Naive thymus-derived CD4-positive, alpha-beta T cell (primary cell): ENCODE measurements at regions of chr19 and their contacts with region 1.

Region 1: GRCh38 chr19:13150187-13150930 is at the starts of genes IER2 and STX10:
- DNase-seq: peak; percentile 84 to 93 (median 92)
- ATAC-seq: peak; percentile 72
- H3K4me3 ChIP-seq: peak within 1 kb of the TSS; percentile 96
- H3K4me3 Mint-ChIP-seq: peak within 1 kb of the TSS; percentile 94 to 100 (median 98)
- H3K27ac ChIP-seq: peak within 1 kb of the TSS; percentile 96
- H3K27ac Mint-ChIP-seq: peak within 1 kb of the TSS; percentile 95 to 99 (median 97)
- H3K4me1 ChIP-seq: peaks cover 9 to 11% of the 10 kb centered on the region in 2 donors
- H3K4me1 Mint-ChIP-seq: peaks cover 6 to 42% (median 18%) of the 10 kb centered on the region in 7 donors
- H3K27me3 ChIP-seq: no peaks in the 10 kb centered on the region
- H3K27me3 Mint-ChIP-seq: peaks cover 0 to 17% (median 0%) of the 10 kb centered on the region in 5 donors
- total RNA-seq, gene IER2: 135 to 558 (median 246) TPM
- total RNA-seq, gene STX10: 42.6 to 76.2 (median 68.5) TPM

Region 2: DNA sequence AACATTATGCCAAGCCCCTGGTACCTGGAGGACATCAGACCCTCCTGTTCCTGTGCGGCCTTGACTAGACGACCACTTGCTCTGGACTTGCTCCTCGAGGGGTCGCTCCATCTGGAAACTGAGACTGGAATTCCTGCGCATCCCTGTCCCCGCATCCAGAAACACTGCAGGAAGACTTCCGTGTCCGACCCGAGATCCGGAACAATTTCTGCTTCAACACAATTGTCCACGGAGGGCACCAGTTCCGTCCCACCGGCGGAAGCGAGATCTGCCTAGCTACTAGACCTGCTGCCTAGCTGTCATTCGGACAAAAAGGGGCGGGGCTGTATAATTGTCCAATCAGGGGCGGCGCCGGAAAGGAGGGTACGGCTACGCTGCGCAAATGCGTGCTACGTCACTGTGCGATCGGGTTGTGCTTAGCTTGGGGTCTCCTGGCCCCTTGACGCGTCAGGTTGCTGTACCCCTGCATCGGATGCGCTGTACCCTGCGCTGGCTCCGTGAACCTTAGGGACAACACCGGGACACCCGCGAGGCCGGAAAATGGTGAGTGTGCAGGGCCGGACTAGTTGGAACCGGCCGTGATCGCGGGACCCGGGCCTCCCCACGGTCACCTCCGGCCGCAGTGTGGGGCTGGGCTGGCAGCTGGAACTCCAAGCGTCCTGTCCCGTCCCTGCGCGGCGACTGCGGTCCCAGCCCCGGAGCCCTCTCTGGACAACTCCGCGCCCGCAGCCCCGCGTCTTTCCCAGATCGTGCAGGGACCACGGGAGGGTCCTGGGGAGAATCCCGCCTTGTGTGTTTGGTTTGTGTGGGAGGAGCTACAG is 539.6 kb before region 1 on chr19 and contains the starts of genes ZNF490 and ZNF791:
- CTCF ChIA-PET with region 1: no interaction called
- POLR2A ChIA-PET with region 1: no interaction called
- intact Hi-C with region 1: loop called in 1 of 2 experiments (anchors 10 kb)
- DNase-seq: peak; percentile 81 to 97 (median 94)
- ATAC-seq: peak; percentile 94
- H3K4me3 ChIP-seq: peak within 1 kb of the TSS; percentile 71
- H3K4me3 Mint-ChIP-seq: peak within 1 kb of the TSS; percentile 94 to 100 (median 100)
- H3K27ac ChIP-seq: peak within 1 kb of the TSS; percentile 95
- H3K27ac Mint-ChIP-seq: peak within 1 kb of the TSS; percentile 97 to 100 (median 99)
- H3K4me1 ChIP-seq: peaks cover 24 to 41% of the 10 kb centered on the region in 2 donors
- H3K4me1 Mint-ChIP-seq: peaks cover 16 to 48% (median 36%) of the 10 kb centered on the region in 7 donors
- H3K27me3 ChIP-seq: no peaks in the 10 kb centered on the region
- H3K27me3 Mint-ChIP-seq: no peaks in the 10 kb centered on the region
- total RNA-seq, gene ZNF490: 10.3 to 14.9 (median 11.6) TPM
- total RNA-seq, gene ZNF791: 29.1 to 53.3 (median 38.7) TPM

Region 3: GRCh38 chr19:12913011-12913561 is 237.3 kb before region 1 on chr19:
- CTCF ChIA-PET with region 1: no interaction called
- POLR2A ChIA-PET with region 1: no interaction called
- intact Hi-C with region 1: no loop called
- DNase-seq: no peak
- ATAC-seq: no peak
- H3K4me3 ChIP-seq: no peak overlapping the region
- H3K4me3 Mint-ChIP-seq: peak overlapping the region in 6 of 10 donors; percentile 23 to 88 (median 52)
- H3K27ac ChIP-seq: peak overlapping the region; percentile 54
- H3K27ac Mint-ChIP-seq: peak overlapping the region; percentile 81 to 99 (median 97)
- H3K4me1 ChIP-seq: peaks cover 12 to 23% of the 10 kb centered on the region in 2 donors
- H3K4me1 Mint-ChIP-seq: peaks cover 11 to 32% (median 25%) of the 10 kb centered on the region in 7 donors
- H3K27me3 ChIP-seq: no peaks in the 10 kb centered on the region
- H3K27me3 Mint-ChIP-seq: no peaks in the 10 kb centered on the region

Region 4: GRCh38 chr19:13099073-13099999 is 51.0 kb before region 1 on chr19:
- CTCF ChIA-PET with region 1: interaction called, 6 read pairs
- POLR2A ChIA-PET with region 1: interaction called, 43 read pairs
- intact Hi-C with region 1: loop called (anchors 1 to 2 kb)
- DNase-seq: peak; percentile 67 to 85 (median 81)
- ATAC-seq: peak; percentile 66
- H3K4me3 ChIP-seq: peak overlapping the region; percentile 74
- H3K4me3 Mint-ChIP-seq: peak overlapping the region; percentile 80 to 90 (median 86)
- H3K27ac ChIP-seq: peak overlapping the region; percentile 82
- H3K27ac Mint-ChIP-seq: peak overlapping the region; percentile 88 to 99 (median 93)
- H3K4me1 ChIP-seq: peaks cover 70 to 71% of the 10 kb centered on the region in 2 donors
- H3K4me1 Mint-ChIP-seq: peaks cover 17 to 64% (median 53%) of the 10 kb centered on the region in 7 donors
- H3K27me3 ChIP-seq: peaks cover 0 to 6% of the 10 kb centered on the region in 2 donors
- H3K27me3 Mint-ChIP-seq: peaks cover 6 to 35% (median 16%) of the 10 kb centered on the region in 5 donors

Region 5: GRCh38 chr19:13127051-13127450 is 23.3 kb before region 1 on chr19:
- CTCF ChIA-PET with region 1: no interaction called
- POLR2A ChIA-PET with region 1: no interaction called
- intact Hi-C with region 1: no loop called
- DNase-seq: no peak
- ATAC-seq: no peak
- H3K4me3 ChIP-seq: no peak overlapping the region
- H3K4me3 Mint-ChIP-seq: no peak overlapping the region
- H3K27ac ChIP-seq: no peak overlapping the region
- H3K27ac Mint-ChIP-seq: no peak overlapping the region
- H3K4me1 ChIP-seq: peaks cover 0 to under 1% of the 10 kb centered on the region in 2 donors
- H3K4me1 Mint-ChIP-seq: peaks cover 20 to 35% (median 26%) of the 10 kb centered on the region in 7 donors
- H3K27me3 ChIP-seq: no peaks in the 10 kb centered on the region
- H3K27me3 Mint-ChIP-seq: no peaks in the 10 kb centered on the region

Region 6: GRCh38 chr19:13172068-13172896 is 21.9 kb after region 1 on chr19:
- CTCF ChIA-PET with region 1: interaction called, 14 read pairs
- POLR2A ChIA-PET with region 1: interaction called, 283 read pairs
- intact Hi-C with region 1: loop called in 1 of 2 experiments (anchors 1 kb)
- DNase-seq: peak; percentile 46 to 80 (median 55)
- ATAC-seq: peak; percentile 14
- H3K4me3 ChIP-seq: peak overlapping the region; percentile 41
- H3K4me3 Mint-ChIP-seq: peak overlapping the region; percentile 79 to 90 (median 84)
- H3K27ac ChIP-seq: peak overlapping the region; percentile 76
- H3K27ac Mint-ChIP-seq: peak overlapping the region; percentile 92 to 100 (median 98)
- H3K4me1 ChIP-seq: peaks cover 57 to 64% of the 10 kb centered on the region in 2 donors
- H3K4me1 Mint-ChIP-seq: peaks cover 40 to 75% (median 59%) of the 10 kb centered on the region in 7 donors
- H3K27me3 ChIP-seq: no peaks in the 10 kb centered on the region
- H3K27me3 Mint-ChIP-seq: no peaks in the 10 kb centered on the region

Region 7: GRCh38 chr19:13234518-13234917 is 84.2 kb after region 1 on chr19:
- CTCF ChIA-PET with region 1: no interaction called
- POLR2A ChIA-PET with region 1: interaction called, 7 read pairs
- intact Hi-C with region 1: loop called in 1 of 2 experiments (anchors 1 kb)
- DNase-seq: peak in 8 of 9 donors; percentile 16 to 74 (median 50)
- ATAC-seq: peak; percentile 91
- H3K4me3 ChIP-seq: peak overlapping the region; percentile 35
- H3K4me3 Mint-ChIP-seq: peak overlapping the region; percentile 5 to 82 (median 59)
- H3K27ac ChIP-seq: no peak overlapping the region
- H3K27ac Mint-ChIP-seq: peak overlapping the region in 6 of 9 donors; percentile 4 to 88 (median 66)
- H3K4me1 ChIP-seq: peaks cover 9 to 15% of the 10 kb centered on the region in 2 donors
- H3K4me1 Mint-ChIP-seq: peaks cover 14 to 22% (median 15%) of the 10 kb centered on the region in 7 donors
- H3K27me3 ChIP-seq: no peaks in the 10 kb centered on the region
- H3K27me3 Mint-ChIP-seq: peaks cover 0 to 6% (median 0%) of the 10 kb centered on the region in 5 donors

Region 8: DNA sequence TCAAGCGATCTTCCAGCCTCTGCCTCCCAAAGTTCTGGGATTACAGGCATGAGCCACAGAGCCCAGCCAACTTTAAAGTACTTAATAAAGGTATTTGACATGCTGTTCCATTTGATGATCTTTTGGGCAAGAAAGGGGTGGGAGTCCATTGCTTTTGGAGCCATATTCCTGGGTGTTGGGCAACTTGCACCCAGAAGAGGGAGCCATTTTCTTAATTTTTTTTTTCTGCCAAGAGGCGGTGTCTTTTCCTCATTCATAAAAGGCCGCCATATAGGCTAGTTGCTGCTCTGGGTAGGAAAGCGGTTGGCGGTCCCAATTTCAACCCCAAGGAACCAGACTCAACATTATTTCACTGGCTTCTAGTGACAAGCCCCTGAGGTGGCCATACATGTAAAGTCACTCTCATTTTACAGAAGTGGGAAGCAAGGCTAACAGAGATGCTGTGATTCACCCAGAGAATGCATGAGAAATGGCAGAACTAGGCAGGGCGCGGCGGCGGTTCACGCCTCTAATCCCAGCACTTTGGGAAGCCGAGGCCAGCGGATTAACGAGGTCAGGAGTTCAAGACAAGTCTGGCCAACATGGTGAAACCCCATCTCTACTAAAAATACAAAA is 216.3 kb after region 1 on chr19:
- CTCF ChIA-PET with region 1: no interaction called
- POLR2A ChIA-PET with region 1: no interaction called
- intact Hi-C with region 1: no loop called
- DNase-seq: no peak
- ATAC-seq: no peak
- H3K4me3 ChIP-seq: no peak overlapping the region
- H3K4me3 Mint-ChIP-seq: no peak overlapping the region
- H3K27ac ChIP-seq: no peak overlapping the region
- H3K27ac Mint-ChIP-seq: no peak overlapping the region
- H3K4me1 ChIP-seq: no peaks in the 10 kb centered on the region
- H3K4me1 Mint-ChIP-seq: no peaks in the 10 kb centered on the region
- H3K27me3 ChIP-seq: no peaks in the 10 kb centered on the region
- H3K27me3 Mint-ChIP-seq: peaks cover 0 to 30% (median 16%) of the 10 kb centered on the region in 5 donors

Region 9: GRCh38 chr19:13846557-13847406 is 696.4 kb after region 1 on chr19:
- CTCF ChIA-PET with region 1: no interaction called
- POLR2A ChIA-PET with region 1: no interaction called
- intact Hi-C with region 1: loop called (anchors 2 to 5 kb)
- DNase-seq: peak; percentile 91 to 98 (median 97)
- ATAC-seq: peak; percentile 75
- H3K4me3 ChIP-seq: peak overlapping the region; percentile 72
- H3K4me3 Mint-ChIP-seq: peak overlapping the region; percentile 82 to 96 (median 90)
- H3K27ac ChIP-seq: peak overlapping the region; percentile 95
- H3K27ac Mint-ChIP-seq: peak overlapping the region; percentile 99 to 100 (median 100)
- H3K4me1 ChIP-seq: peaks cover 47 to 55% of the 10 kb centered on the region in 2 donors
- H3K4me1 Mint-ChIP-seq: peaks cover 19 to 62% (median 55%) of the 10 kb centered on the region in 7 donors
- H3K27me3 ChIP-seq: no peaks in the 10 kb centered on the region
- H3K27me3 Mint-ChIP-seq: peaks cover 0 to 3% (median 0%) of the 10 kb centered on the region in 5 donors

Region 10: DNA sequence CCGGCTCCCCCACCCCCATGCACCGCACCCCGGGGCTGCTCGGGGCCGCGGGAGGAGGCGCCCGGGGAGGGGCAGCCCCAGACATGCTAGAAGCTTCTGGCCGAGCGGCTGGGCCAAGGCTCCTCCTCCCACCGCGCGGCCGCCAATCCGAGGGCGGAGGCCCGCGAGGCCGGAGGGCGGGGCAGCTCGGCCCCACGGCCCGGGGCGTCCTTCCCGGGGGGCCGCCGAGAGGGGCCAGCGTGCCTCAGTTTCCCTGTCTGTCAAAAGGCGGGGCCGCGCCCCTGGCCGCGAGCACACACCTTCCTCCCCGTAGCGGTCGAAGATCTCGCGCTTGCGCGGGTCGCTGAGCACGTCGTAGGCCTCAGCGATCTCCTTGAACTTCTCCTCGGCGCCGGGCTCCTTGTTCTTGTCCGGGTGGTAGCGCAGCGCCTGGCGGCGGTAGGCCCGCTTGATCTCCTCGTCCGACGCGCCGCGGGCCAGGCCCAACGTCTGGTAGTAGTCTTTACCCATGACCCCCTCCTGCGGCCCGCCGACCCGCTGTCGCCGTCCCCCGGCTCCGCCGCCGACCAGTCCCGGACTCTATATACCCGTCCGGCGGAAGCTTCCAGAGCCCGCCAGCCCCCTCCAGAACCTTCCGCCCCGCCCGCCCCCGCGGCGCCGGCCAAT is 1367.6 kb after region 1 on chr19 and contains the start of gene DNAJB1:
- CTCF ChIA-PET with region 1: no interaction called
- POLR2A ChIA-PET with region 1: no interaction called
- intact Hi-C with region 1: loop called (anchors 5 kb)
- DNase-seq: peak in 2 of 9 donors; percentile 53 to 86
- ATAC-seq: peak; percentile 33
- H3K4me3 ChIP-seq: peak within 1 kb of the TSS; percentile 73
- H3K4me3 Mint-ChIP-seq: peak within 1 kb of the TSS; percentile 93 to 99 (median 96)
- H3K27ac ChIP-seq: peak within 1 kb of the TSS; percentile 97
- H3K27ac Mint-ChIP-seq: peak within 1 kb of the TSS; percentile 92 to 100 (median 98)
- H3K4me1 ChIP-seq: peaks cover 57 to 64% of the 10 kb centered on the region in 2 donors
- H3K4me1 Mint-ChIP-seq: peaks cover 42 to 80% (median 72%) of the 10 kb centered on the region in 7 donors
- H3K27me3 ChIP-seq: no peaks in the 10 kb centered on the region
- H3K27me3 Mint-ChIP-seq: peaks cover 0 to 2% (median 0%) of the 10 kb centered on the region in 5 donors
- total RNA-seq, gene DNAJB1: 87.4 to 574 (median 177) TPM